Right ventricle myocardium inferior (tissue), 1 donor: ENCODE measurements at regions of chr15 and their contacts with region 1.

Region 1: DNA sequence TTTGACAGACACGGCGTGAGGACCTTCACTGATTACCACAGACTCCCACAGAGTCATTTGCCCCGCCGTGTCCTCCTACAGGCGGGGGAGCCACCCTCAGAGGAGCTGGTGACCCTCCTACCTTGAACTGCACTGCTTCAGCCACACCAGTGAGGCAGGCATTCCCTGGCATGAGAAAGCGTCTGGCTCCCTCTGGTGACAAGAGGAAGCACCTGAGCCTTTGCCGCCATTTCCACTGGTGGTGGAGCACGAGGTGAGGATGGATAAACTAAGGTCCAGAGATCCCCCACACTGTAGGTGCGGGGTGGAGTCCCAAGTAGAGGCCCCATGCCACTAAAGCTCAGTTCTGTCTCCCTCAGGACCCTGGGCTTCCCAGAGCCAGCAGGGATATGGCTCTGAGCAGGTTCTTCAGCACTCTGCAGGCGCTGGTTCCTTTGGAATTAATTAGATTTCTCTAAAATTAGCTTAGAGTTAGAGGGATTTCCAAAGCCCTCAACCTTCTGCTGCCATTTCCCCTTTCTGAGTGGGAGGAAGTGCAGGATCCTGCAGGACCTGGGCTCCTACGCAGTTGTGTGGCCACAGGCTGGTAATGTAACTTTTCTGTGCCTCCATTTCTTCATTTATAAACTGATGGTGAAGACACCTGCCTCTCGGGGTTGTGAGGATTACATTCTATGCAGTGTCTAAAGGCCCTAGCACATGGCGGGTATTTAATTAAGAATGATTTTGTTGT is 224.0 kb downstream of the SLCO3A1 start:
- DNase-seq: no peak
- ATAC-seq: peak; percentile 73

Region 2: GRCh38 chr15:91535856-91536500 is 541.5 kb before region 1 on chr15:
- intact Hi-C with region 1: loop called (anchors 10 kb)
- DNase-seq: no peak
- ATAC-seq: peak; percentile 24

Region 3: GRCh38 chr15:91706322-91707032 is 371.0 kb before region 1 on chr15:
- intact Hi-C with region 1: loop called (anchors 2 kb)
- DNase-seq: peak; percentile 81
- ATAC-seq: peak; percentile 89

Region 4: DNA sequence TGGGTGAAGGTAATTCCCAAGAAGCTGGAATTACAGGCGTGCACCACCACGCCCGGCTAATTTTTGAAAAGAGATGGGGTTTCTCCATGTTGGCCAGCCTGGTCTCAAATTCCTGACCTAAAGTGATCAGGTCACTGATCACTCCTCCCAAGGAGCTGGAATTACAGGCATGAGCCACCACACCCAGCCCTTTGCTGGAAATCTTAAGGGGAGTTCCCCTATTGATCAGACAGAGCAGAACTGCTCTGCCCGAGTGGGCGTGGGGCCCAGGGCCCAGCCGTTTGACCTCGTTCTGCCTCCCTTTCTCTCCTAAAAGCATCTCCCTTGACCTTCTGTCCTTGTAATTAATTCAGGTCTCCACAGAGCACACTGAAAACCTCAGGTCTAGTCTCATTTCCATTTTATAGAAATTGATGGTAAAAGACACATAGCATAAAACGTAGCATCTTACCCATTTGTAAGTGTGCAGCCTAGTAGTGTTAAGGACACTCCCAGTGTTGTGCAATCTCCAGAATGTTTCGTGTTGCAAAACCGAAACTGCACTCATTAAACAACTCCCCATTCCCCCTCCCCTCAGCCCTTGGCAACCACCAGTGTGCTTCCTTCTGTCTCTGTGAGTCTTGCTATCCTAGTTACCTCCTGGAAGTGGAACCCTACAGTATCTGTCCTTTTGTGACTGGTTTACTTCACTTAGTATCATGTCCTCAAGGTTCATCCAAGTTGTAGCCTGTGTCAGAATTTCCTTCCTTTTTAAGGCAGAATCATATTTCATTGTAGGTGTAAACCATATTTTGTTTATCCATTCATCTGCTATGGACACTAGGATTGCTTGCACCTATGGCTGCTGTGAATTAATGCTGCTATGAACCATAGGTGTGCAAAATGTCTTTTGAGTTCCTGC is 134.6 kb before region 1 on chr15:
- intact Hi-C with region 1: loop called (anchors 2 kb)
- DNase-seq: peak; percentile 90
- ATAC-seq: peak; percentile 88

Region 5: GRCh38 chr15:92268906-92269305 is 191.4 kb after region 1 on chr15:
- intact Hi-C with region 1: no loop called
- DNase-seq: no peak
- ATAC-seq: no peak